AG04449 (cell line): ENCODE measurements at regions of chr11 and their contacts with region 1.

Region 1: DNA sequence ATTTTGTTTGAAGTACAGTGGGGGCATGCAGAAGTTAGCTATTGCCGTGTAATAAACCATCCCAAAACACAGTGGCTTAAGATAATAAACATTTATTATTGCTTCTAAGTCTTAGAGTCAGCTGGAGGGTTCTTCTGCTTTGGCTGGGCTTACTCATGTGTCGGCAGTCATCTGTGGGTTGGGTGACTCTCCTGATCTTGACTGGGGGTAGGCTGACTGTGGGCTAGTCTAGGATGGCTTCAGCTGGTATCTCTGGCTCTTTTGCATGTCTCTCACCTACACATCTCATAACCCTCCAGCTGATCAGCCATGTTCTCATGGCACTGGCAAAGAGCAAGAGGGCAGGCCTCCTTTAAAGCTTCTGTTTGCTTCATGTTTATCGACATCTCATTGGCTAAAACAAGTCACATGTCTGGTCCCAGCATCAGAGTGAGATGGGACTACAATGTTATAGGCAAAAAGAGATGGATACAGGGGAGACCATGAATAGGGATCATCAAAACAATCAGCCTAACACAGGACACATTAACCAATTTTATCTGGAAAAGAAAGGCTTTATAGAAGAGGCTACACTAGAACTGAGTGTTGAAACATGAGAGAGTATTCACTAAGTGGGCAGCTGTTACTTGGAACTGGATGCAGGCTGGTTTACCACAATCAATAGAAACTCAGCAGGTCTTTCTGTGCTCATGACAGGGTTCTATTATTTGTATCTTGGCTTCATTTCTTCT is 5.1 kb downstream of the LRRC51 start:
- DNase-seq: no peak
- H3K4me3 ChIP-seq: no peak overlapping the region
- CTCF ChIP-seq: no peak

Region 2: GRCh38 chr11:72102946-72103753 is 17.4 kb after region 1 on chr11 and contains the start of gene LAMTOR1:
- CTCF ChIA-PET with region 1: interaction called, 77 read pairs
- POLR2A ChIA-PET with region 1: interaction called, 4 read pairs
- DNase-seq: peak; percentile 91
- H3K4me3 ChIP-seq: peak within 1 kb of the TSS; percentile 78
- CTCF ChIP-seq: peak; percentile 40